ENCODE measurements at regions of chr1 and their contacts with region 1.

Region 1: DNA sequence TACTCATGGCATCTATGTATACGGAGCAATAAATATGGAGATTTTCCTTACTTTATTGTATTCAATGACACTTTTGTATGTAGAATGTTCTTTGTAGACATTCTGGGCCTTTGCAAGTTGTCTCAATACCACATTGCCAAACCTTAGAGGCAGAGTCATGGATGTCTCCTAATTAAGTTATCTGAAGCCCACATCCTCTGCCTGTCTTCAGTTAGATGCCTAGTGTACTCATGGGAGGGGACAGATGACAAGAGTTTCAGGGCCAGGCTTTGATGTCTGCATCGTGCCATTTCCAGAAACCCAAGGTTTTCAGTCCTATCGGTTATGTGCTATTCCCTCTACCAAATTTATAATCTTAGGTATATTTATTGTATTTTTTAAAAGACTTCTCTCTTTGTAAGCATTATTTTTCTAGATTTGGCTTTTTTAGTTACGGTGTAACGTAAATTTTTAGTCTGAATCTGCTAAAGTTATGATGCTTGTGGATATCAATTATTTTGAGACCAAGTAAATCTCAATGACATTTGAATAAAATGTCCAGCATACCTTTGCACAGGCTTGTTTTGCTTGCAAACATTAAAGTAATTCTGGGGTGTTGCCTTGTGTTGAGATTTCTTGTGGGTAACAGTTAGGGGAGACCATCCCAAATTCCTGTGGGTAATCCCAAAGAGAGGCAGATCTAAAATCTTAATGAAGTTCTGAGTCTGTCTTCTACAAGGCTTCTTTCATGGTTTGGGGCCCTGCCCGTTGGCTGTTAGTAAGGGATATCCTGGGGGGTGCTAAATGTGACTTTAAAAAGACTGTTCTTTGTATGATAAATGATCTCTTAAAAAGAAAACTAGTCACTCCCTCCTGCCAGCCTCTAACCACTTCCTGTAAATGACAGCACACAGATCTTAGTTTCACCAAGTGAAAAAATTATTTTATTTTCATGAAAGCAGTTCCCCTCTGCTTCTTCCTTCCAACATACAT is 8.0 kb upstream of the MACF1 start:
- DNase-seq: peak; percentile 45
- H3K4me3 Mint-ChIP-seq: peak overlapping the region; percentile 70
- H3K27ac Mint-ChIP-seq: peak overlapping the region; percentile 95
- H3K4me1 Mint-ChIP-seq: peaks cover 71% of the 10 kb centered on the region
- H3K27me3 Mint-ChIP-seq: no peaks in the 10 kb centered on the region

Region 2: GRCh38 chr1:38990738-38991639 is 205.5 kb before region 1 on chr1 and contains the start of gene AKIRIN1:
- intact Hi-C with region 1: loop called (anchors 10 kb)
- DNase-seq: peak; percentile 95
- H3K4me3 Mint-ChIP-seq: peak within 1 kb of the TSS; percentile 84
- H3K27ac Mint-ChIP-seq: peak within 1 kb of the TSS; percentile 80
- H3K4me1 Mint-ChIP-seq: peaks cover 32% of the 10 kb centered on the region
- H3K27me3 Mint-ChIP-seq: no peaks in the 10 kb centered on the region
- total RNA-seq, gene AKIRIN1: 68.6 and 69.7 TPM in 2 replicates

Region 3: DNA sequence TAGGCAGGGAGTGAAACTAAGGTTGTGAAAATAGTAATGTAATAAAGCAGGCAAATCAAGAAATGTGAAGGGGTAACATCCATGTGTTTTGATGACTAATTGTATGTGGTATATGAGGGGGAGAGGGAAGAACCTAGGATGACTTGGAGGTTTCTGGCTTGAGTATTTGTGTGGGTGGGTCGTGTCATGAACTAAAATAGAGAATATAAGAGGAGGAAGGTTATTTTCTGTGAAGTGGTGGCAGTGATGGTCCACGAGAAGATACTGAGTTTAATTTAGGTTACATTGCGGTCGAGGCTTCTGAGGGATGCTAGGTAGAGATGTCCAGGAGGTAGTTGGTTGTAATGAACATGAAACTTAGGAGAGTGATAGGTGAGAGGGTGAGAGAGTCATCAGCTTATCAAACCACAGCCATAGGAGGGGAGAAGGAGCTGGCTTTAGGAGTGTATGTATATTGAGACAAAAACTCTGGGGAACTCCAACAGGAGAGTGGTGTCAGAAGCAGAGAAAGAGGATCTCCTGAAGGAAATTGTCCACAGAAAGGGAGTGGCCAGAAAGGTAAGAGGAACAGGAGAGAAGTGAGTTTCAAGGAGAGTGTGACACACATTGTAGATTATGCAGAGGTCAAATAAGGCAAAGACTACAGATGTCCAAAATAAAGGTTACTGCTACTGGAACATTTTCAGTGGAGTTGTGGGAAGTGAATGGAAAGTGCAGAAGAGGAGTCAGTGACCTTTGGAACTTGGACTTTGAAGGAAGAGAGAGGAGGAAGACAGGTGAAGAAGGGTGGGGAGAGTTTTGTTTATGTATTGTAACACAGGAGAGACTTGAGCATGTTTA is 81.0 kb before region 1 on chr1:
- intact Hi-C with region 1: loop called (anchors 1 kb)
- DNase-seq: no peak
- H3K4me3 Mint-ChIP-seq: no peak overlapping the region
- H3K27ac Mint-ChIP-seq: no peak overlapping the region
- H3K4me1 Mint-ChIP-seq: peaks cover 4% of the 10 kb centered on the region
- H3K27me3 Mint-ChIP-seq: peaks cover 7% of the 10 kb centered on the region

Region 4: DNA sequence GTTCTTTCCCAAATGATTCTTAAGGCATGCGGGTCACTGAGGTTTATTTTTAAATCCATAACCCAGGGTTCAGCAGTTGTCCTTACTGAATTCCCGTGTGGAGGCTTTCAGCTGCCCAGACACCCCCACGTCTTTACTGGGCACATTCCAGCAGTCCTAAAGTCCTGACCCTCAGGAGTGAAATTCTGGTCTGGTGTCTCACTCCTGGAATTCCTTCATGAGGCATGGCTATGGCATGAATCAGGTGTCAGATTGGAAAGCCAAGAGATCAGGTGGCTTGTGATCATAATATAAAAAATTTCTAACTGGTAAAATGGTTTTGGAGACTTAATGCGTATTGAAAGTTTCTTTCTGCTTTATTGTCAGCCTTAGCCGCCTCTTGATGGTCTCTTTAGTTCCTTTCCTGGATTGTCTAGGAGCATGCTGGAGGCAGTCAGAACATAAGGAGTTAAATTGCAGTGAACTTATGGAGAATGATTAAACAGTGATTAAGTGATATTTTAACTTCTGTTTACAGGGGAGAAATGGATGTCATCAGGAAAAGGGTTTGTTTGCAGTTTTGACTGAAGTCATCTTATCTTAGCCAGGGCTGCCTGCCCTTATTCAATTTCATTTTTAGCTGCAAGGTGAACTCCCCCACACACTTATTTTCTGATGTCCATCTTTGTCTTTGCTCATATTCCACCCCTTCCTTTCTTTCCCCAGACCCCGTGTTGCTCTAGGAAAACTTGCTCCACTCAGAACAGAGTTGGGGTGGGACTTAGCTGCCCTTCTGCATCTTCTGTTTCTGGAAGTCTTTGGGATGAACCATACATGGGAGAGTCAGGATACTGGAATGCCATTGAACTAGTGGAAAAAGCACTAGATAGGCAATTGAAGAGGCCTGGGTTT is 17.7 kb before region 1 on chr1:
- intact Hi-C with region 1: no loop called
- DNase-seq: no peak
- H3K4me3 Mint-ChIP-seq: no peak overlapping the region
- H3K27ac Mint-ChIP-seq: no peak overlapping the region
- H3K4me1 Mint-ChIP-seq: peaks cover 11% of the 10 kb centered on the region
- H3K27me3 Mint-ChIP-seq: no peaks in the 10 kb centered on the region

Region 5: DNA sequence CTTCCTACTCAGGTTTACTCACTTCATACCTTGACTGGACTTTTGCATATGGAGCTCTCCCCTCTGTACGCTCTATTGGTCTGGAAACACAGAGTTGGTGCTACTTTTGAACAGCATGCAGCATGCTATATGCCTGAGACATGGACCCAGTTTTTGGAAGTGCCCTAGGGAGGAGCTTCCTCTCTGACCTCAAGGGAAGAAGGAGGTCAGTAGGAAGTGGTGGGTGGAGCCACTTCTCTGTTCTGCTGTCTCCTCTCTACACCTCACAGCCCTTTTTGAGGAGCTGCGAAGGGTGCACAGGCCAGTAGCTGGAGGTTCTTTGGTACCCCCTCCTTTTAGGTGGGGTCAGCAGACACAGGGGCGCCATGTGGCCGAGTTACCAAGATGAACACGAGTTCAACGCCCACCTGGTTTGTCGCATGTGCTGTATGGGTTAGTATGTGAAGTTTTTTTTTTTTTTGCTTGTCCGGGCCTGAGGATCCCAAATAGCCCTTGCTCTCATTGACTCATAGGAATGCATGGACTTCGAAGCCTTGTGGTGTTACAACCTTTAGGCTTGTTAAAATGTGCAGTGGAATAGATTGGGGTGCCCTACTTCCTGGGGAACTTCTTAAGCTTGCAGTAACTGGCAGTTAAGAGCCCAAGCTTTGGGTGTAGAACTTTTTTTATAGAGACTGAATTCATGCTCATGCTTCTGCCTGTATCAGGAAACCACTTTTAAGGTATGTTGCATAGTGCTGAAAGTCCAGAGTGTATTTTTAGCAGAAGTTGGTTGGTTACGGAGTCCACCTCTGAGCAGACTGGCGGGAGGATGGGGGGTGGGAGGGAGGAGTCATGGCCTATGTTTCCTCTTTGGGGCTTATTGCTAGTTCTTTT is 18.7 kb after region 1 on chr1:
- intact Hi-C with region 1: loop called (anchors 1 kb)
- DNase-seq: no peak
- H3K4me3 Mint-ChIP-seq: peak overlapping the region; percentile 89
- H3K27ac Mint-ChIP-seq: peak overlapping the region; percentile 93
- H3K4me1 Mint-ChIP-seq: peaks cover 41% of the 10 kb centered on the region
- H3K27me3 Mint-ChIP-seq: no peaks in the 10 kb centered on the region

Region 6: DNA sequence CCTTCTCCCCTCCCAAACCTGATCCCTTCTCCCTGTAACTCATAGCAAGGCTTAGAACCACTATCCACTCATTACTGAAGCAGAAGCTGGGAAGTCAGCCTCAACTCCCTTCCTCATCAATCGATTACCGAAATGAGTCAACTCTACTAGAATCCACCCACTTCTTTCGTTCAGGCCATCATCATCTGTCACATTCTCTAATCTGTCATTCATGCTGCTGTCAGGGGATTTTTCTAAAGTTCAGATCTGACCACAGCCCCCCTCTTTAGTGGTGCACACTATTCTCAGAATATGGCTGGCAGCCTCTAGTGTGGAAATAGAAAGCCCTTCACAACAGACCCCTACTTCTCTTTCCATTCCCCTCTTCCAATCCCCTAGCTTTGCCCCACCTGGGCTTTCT is 470.2 kb after region 1 on chr1:
- intact Hi-C with region 1: loop called (anchors 10 kb)
- DNase-seq: peak; percentile 28
- H3K4me3 Mint-ChIP-seq: no peak overlapping the region
- H3K27ac Mint-ChIP-seq: peak overlapping the region; percentile 65
- H3K4me1 Mint-ChIP-seq: peaks cover 25% of the 10 kb centered on the region
- H3K27me3 Mint-ChIP-seq: peaks cover 15% of the 10 kb centered on the region

Measured in activated T-helper 2 cell treated with anti-CD3 and anti-CD28 coated beads, Interferon-gamma antibody, Interleukin-2, Interleukin-4, amounts not matched to agents 10 μg/mL and 5 μg/mL and 100 μg/mL, durations not matched to agents 14 hours and 24 hours and 36 hours (primary cell).